Heart left ventricle (tissue), 16 donors: ENCODE measurements at regions of chr13 and their contacts with region 1.

Region 1: DNA sequence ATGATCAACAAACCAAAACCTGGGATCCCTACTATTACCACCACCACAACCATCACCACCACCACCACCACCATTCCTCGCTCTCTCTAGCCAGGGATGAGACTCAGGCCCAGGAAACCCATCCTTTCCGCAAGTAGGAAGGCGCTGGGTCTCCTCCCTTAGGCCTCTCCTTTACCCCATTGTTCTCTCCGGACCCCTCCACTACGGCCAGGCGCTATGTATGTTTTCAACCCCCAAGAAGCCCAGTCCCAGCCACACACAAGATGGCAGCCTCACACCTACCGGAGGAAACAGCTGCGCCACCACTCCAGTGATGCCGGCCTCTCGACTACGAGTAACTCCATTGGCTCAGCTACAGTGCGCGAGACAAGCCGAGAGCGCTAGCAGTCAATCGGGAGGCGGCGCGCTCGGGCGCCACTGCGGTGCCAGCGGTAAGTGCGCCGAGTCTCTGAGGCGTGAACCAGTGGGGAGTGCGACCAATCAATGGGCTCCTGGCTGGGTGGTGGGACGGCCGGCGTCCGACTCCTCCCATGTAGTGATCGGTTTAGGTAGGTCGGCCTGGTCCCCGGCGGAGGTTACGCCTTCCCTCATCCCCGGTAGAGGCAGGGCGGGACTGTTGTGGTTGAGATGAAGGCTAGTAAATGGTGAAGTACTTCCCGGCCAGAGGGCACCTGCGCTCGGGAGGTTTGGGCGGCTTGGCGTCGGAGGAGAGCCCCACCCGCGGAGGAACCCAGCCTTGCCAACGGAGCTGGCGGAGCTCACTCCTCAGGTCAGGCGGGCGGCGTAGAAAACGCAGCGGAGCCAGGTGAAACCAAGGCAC is at the starts of genes CAB39L and SETDB2:
- DNase-seq: peak; percentile 99 to 100 (median 99)
- ATAC-seq: peak; percentile 98 to 99 (median 99)
- H3K4me3 ChIP-seq: peak within 1 kb of the TSS; percentile 40 to 88 (median 82)
- H3K27ac ChIP-seq: peak within 1 kb of the TSS; percentile 81 to 99 (median 92)
- H3K4me1 ChIP-seq: peaks cover 0 to 47% (median 16%) of the 10 kb centered on the region in 12 donors
- H3K27me3 ChIP-seq: no peaks in the 10 kb centered on the region
- CTCF ChIP-seq: peak in 11 of 12 donors; percentile 10 to 70 (median 37)
- POLR2A ChIP-seq: peak in 1 of 2 donors; percentile 83
- total RNA-seq, gene CAB39L: 10.2 to 27.4 (median 19.0) TPM
- total RNA-seq, gene SETDB2: 7.9 to 19.8 (median 13.5) TPM

Region 2: DNA sequence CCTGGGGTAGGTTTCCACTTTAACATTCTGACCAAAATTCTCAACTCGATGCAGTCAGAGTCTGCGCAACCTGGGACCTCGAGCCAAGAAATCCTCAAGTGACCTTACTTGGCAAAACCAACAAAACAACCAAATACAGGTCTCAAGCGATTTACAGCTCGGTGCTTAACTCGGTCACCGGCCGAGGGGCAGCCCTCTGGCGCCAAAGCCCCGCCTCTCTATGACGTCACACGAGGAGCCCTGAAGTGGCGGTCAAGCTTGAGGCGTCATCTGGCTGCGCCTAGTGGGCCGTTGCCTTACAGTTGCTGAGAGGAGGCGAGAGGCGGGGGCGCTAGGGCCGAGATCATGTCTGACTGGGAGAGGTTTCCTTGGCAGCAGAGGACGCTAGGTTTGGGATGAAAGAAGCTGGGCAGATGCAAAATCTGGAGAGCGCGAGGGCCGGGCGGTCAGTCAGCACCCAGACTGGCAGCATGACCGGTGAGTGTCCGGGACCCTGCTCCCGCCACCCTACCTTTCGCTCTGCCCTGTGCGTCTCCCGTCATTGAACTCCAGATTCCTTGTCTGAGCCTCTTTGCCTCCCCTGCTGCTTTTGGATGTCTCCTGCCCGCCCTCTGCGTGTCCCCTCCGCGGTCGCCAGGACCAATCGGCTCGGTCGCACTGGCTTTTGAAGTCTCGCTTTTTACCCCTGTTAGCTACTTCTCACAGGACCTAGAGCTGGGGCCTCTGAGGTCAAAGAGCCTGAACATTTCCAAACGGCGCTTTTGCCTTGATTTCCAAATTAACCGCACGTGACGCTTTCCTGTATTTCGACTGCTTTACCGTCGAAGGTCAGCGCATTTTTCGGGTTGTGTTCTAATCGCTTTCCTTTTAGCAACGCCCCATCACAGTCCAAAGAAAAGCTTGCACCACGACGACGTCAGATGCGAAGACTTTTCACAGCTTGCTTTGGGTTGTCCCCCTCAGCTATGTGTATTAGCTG is 196.0 kb before region 1 on chr13 and contains the start of gene CDADC1:
- intact Hi-C with region 1: loop called in 1 of 10 experiments (anchors 5 kb)
- DNase-seq: peak; percentile 97 to 99 (median 98)
- ATAC-seq: peak; percentile 96 to 99 (median 98)
- H3K4me3 ChIP-seq: peak within 1 kb of the TSS; percentile 62 to 97 (median 84)
- H3K27ac ChIP-seq: peak within 1 kb of the TSS; percentile 74 to 93 (median 90)
- H3K4me1 ChIP-seq: peaks cover 0 to 40% (median 14%) of the 10 kb centered on the region in 12 donors
- H3K27me3 ChIP-seq: no peaks in the 10 kb centered on the region
- CTCF ChIP-seq: peak in 1 of 12 donors; percentile 10
- POLR2A ChIP-seq: peak in 1 of 2 donors; percentile 74
- total RNA-seq, gene CDADC1: 2.8 to 10.8 (median 10.3) TPM

Region 3: GRCh38 chr13:49319551-49319950 is 124.4 kb before region 1 on chr13:
- intact Hi-C with region 1: no loop called
- DNase-seq: no peak
- ATAC-seq: no peak
- H3K4me3 ChIP-seq: no peak overlapping the region
- H3K27ac ChIP-seq: peak overlapping the region in 1 of 12 donors; percentile 19
- H3K4me1 ChIP-seq: peaks cover 0 to 22% (median 5%) of the 10 kb centered on the region in 12 donors
- H3K27me3 ChIP-seq: no peaks in the 10 kb centered on the region
- CTCF ChIP-seq: no peak
- POLR2A ChIP-seq: no peak

Region 4: GRCh38 chr13:49481788-49482187 is 37.9 kb after region 1 on chr13:
- intact Hi-C with region 1: no loop called
- DNase-seq: no peak
- ATAC-seq: no peak
- H3K4me3 ChIP-seq: no peak overlapping the region
- H3K27ac ChIP-seq: no peak overlapping the region
- H3K4me1 ChIP-seq: peaks cover 0 to 5% (median 0%) of the 10 kb centered on the region in 12 donors
- H3K27me3 ChIP-seq: no peaks in the 10 kb centered on the region
- CTCF ChIP-seq: no peak
- POLR2A ChIP-seq: no peak

Region 5: DNA sequence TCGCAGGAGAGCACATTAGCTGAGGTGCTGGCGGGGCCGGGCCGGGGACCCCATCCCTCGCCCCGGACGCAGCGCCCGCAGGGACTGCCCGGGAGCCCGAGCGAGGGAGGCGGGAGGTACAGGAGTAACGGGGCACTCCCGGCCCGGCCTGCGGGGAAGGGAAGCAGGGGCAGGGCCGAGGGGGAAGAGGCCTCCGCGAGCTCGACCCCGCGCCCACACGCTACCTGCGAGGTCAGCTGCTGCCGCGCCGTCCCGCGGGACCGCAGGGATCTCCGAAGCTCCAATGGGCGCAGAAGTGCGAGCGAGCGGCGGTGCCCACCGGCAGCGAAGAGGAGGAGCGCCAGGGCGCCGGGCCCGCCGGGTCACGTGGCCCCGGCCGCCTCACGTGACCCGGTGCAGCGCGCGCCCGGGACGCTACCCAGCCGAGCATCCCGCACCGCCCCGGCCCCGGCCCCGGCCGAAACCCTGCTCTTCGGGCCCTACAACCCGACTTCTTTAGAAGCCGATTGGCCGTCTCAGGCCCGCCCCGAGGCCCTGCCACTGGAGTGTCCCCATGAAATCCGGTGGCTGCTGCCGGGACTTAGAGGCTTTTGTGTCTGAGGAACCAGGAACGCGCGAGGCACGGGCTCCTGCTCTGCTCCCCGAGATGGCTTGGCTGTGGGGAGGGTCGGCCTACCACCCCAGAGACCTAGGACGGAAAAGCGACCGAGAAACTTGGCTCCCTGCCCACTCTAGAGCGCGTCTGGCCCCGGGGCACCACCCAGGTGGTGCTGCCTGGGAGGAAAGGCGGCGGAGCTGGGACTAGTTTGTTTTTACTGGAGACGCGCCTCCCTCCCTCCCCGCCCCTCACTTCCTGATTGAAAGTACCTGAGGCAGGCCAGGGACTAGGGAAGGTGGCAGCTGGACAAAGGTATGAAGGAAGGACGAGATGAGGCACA is 141.6 kb after region 1 on chr13 and contains the start of gene RCBTB1:
- intact Hi-C with region 1: loop called in 1 of 10 experiments (anchors 10 kb)
- DNase-seq: peak; percentile 67 to 85 (median 71)
- ATAC-seq: peak; percentile 85 to 99 (median 96)
- H3K4me3 ChIP-seq: peak within 1 kb of the TSS; percentile 73 to 99 (median 91)
- H3K27ac ChIP-seq: peak within 1 kb of the TSS; percentile 38 to 93 (median 83)
- H3K4me1 ChIP-seq: peaks cover 0 to 23% (median 13%) of the 10 kb centered on the region in 12 donors
- H3K27me3 ChIP-seq: no peaks in the 10 kb centered on the region
- CTCF ChIP-seq: no peak
- POLR2A ChIP-seq: peak in 1 of 2 donors; percentile 53
- total RNA-seq, gene RCBTB1: 10.9 to 25.8 (median 17.2) TPM

Region 6: DNA sequence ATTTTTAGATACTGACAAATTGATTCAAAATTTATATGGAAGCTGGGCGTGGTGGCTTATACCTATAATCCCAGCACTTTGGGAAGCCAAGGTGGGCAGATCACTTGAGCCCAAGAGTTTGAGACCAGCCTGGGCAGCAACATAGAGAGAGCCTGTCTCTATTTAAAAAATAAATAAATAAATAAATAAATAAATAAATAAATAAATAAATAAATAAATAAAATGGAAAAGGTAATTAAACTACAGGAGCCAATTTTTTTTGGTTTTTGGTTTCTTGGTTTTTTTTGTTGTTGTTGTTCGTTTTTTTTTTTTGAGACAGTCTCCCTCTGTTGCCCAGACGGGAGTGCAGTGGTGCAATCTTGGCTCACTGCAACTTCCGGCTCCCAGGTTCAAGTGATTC is 523.5 kb after region 1 on chr13:
- intact Hi-C with region 1: no loop called
- DNase-seq: no peak
- ATAC-seq: no peak
- H3K4me3 ChIP-seq: no peak overlapping the region
- H3K27ac ChIP-seq: no peak overlapping the region
- H3K4me1 ChIP-seq: no peaks in the 10 kb centered on the region
- H3K27me3 ChIP-seq: no peaks in the 10 kb centered on the region
- CTCF ChIP-seq: no peak
- POLR2A ChIP-seq: no peak